Aorta (tissue), 5 donors: ENCODE measurements at regions of chr17 and their contacts with region 1.

Region 1: DNA sequence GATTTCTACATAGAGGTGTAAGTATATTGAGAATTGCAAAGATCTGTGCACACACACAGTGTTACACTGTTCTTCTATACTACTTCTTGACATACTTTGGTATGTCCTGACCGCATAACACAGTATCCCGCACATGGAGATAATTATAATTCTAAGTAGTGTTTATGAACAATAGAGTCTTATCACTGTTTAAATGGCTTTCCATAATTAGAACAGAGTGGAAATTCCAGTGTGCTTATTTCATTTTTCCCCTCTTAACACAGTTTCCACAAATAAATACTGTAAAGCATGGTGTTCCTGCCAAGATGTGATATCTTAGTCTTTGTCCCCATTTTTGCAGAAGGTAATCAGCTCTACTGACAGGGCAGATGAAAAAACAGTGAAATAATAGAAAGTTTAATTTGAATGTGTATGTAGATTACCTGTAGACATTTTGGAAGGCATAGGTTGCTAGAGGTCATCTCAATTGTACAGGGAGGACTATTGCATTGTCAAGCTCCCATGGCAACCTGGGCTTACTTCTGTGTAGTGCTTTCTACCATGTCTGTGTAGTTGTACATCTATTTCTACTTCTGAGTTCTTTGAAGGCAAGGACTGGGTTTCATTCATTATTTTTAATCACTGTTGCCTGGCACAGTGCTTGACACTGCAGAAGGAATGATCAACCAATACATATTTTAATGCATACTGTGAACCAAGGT is 10.1 kb upstream of the KRT28 start:
- DNase-seq: no peak
- ATAC-seq: no peak
- H3K4me3 ChIP-seq: no peak overlapping the region
- H3K27ac ChIP-seq: no peak overlapping the region
- H3K4me1 ChIP-seq: peaks cover 3 to 6% of the 10 kb centered on the region in 2 donors
- H3K27me3 ChIP-seq: no peaks in the 10 kb centered on the region

Region 2: GRCh38 chr17:40909351-40909750 is 99.5 kb after region 1 on chr17:
- intact Hi-C with region 1: loop called in 1 of 2 experiments (anchors 5 kb)
- DNase-seq: peak; percentile 81 to 87
- ATAC-seq: peak; percentile 95
- H3K4me3 ChIP-seq: no peak overlapping the region
- H3K27ac ChIP-seq: no peak overlapping the region
- H3K4me1 ChIP-seq: peaks cover 0 to 7% of the 10 kb centered on the region in 2 donors
- H3K27me3 ChIP-seq: no peaks in the 10 kb centered on the region